ENCODE measurements at regions of chr12 and their contacts with region 1.

Region 1: DNA sequence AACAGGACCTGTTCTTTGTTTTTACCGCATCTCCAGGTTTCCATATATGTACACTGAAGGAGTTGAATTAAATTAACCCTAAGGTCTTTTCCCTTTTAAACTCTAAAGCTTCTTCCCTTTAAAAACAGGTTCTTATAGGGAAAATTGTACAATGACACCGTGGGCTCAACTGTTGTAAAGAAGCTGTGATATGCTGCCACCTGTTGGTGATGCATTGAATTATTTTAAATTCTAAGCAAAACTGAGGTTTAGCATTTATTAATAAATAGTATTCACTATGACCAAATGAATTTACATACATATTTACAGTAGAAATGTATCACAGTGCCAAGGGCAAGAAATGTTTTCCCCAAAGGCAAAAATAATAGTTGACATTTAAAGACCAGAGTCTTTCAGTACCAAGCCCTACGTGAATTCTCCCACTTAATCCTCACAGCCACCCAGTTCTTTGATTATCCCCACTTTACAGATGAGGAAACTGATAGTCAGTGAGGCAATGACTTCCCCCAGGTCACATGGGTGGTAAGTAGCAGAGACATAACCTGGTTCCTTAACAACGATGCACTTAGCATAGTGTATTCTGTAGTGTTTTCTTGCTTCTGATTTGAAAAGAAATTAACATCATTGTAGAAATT is 35.7 kb upstream of the TMEM263 start:
- DNase-seq: no peak
- H3K4me3 Mint-ChIP-seq: no peak overlapping the region
- H3K27ac Mint-ChIP-seq: no peak overlapping the region
- H3K4me1 Mint-ChIP-seq: peaks cover 10% of the 10 kb centered on the region
- H3K27me3 Mint-ChIP-seq: peaks cover 6% of the 10 kb centered on the region

Region 2: GRCh38 chr12:106357549-106358395 is 562.3 kb before region 1 on chr12 and contains the start of gene POLR3B:
- CTCF ChIA-PET with region 1: interaction called, 18 read pairs
- DNase-seq: peak; percentile 96
- H3K4me3 Mint-ChIP-seq: peak within 1 kb of the TSS; percentile 88
- H3K27ac Mint-ChIP-seq: peak within 1 kb of the TSS; percentile 94
- H3K4me1 Mint-ChIP-seq: peaks cover 16% of the 10 kb centered on the region
- H3K27me3 Mint-ChIP-seq: peaks cover 7% of the 10 kb centered on the region

Region 3: GRCh38 chr12:106380954-106381353 is 539.1 kb before region 1 on chr12:
- CTCF ChIA-PET with region 1: interaction called, 11 read pairs
- DNase-seq: no peak
- H3K4me3 Mint-ChIP-seq: no peak overlapping the region
- H3K27ac Mint-ChIP-seq: no peak overlapping the region
- H3K4me1 Mint-ChIP-seq: peaks cover 13% of the 10 kb centered on the region
- H3K27me3 Mint-ChIP-seq: no peaks in the 10 kb centered on the region

Region 4: DNA sequence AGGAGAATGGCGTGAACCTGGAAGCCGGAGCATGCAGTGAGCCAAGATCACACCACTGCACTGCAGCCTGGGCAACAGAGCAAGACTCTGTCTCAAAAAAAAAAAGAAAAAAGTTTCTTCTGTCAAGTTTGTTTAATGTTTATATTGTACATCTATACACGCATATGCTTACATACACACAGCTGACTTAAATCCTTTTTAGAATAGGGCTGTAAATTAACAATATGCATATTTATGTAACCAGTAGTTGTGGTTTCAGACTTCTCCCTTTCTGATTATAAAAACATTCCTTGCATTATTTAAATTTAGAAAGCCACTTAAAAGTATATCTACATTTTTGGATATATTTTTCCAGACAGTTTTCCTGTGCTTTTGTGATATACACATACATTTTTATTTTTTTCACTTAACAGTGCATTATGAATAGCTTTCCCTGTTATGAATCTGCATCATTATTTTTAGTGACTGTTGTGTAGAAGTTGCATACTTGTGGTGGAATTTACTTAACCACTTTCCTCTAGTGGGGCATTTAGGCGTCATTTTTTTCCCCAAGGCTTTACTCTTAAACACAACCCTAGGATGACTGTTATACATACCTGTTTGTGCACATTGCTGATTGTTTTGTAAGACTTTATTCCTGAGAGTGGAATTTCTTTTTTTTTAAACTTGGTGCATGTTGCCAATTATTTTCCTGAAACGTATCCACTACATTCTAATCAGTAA is 533.1 kb before region 1 on chr12:
- CTCF ChIA-PET with region 1: interaction called, 27 read pairs
- DNase-seq: no peak
- H3K4me3 Mint-ChIP-seq: no peak overlapping the region
- H3K27ac Mint-ChIP-seq: no peak overlapping the region
- H3K4me1 Mint-ChIP-seq: no peaks in the 10 kb centered on the region
- H3K27me3 Mint-ChIP-seq: no peaks in the 10 kb centered on the region

Region 5: DNA sequence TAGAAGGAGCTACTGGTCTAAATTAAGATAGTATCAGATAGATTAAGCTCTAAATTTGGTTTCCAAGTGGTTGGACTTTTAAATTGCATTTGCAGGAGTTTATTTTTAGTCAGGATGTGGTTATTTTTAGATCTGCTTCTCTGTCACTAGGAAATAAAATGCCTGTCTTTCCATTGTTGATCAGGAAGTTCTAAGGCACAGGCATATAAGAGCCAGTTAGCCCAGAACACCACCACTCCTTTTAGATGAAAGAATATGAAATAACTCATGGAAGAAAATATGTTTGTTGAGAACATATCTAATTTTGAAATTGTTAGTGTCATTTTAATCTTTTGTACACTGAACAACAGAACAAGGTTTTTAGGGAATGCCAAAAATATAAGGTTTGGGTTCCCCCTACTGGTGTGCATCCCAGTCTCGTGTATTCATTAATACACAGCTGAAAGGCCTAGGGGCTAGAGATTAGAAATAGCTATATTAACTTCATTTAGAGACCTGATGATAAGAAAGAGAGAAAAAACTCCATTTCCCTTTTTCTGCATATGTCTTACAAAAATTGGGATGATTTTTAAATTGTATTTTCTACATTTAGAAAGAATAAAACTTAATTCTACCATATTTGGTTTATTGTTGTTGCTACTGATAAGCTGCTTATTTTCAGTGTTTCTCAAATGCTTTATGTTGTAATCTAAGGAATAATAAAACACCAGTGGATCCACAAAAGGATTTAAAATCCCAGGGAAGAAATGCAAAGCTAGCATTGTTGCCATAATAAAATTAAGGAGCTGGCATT is 78.3 kb before region 1 on chr12:
- CTCF ChIA-PET with region 1: interaction called, 21 read pairs
- DNase-seq: peak; percentile 44
- H3K4me3 Mint-ChIP-seq: no peak overlapping the region
- H3K27ac Mint-ChIP-seq: no peak overlapping the region
- H3K4me1 Mint-ChIP-seq: peaks cover 7% of the 10 kb centered on the region
- H3K27me3 Mint-ChIP-seq: no peaks in the 10 kb centered on the region

Region 6: DNA sequence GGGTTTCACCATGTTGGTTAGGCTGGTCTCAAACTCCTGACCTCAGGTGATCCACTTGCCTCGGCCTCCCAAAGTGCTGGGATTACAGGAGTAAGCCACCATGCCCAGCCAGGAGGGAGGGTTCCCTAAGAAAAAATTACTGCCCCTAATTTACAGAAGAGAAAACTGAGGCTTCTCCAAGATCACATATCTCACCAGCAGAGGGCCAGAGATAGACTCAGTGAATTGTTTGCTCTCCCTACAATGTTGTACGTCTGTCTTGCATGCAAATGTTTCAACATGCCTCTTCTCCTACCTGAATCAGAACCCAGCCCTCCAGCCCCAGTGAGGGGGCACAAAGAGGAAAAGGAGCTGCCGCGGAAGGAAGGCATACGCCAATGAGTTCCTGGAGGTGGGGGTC is 12.6 kb before region 1 on chr12:
- CTCF ChIA-PET with region 1: interaction called, 10 read pairs
- DNase-seq: no peak
- H3K4me3 Mint-ChIP-seq: no peak overlapping the region
- H3K27ac Mint-ChIP-seq: no peak overlapping the region
- H3K4me1 Mint-ChIP-seq: peaks cover 21% of the 10 kb centered on the region
- H3K27me3 Mint-ChIP-seq: peaks cover 39% of the 10 kb centered on the region

Region 7: DNA sequence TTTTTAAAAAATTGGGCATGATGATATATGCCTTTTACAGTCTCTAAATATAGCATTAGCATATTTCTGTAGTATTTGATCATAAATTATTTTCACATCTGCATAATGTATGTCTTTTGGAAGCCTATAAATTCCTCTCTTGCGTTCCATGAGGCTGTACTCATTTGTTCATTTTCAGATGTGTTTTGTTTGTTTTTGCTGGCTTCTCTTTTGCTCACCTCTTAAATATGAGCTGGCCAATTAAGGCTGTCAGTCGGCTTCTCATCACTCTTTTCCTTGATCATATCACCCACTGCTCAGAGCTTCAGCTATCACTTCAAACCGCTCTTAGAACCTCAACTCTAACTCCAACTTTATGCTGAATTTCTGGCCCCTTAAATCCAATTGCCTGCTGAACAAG is 42.3 kb after region 1 on chr12:
- CTCF ChIA-PET with region 1: no interaction called
- DNase-seq: no peak
- H3K4me3 Mint-ChIP-seq: no peak overlapping the region
- H3K27ac Mint-ChIP-seq: no peak overlapping the region
- H3K4me1 Mint-ChIP-seq: peaks cover 21% of the 10 kb centered on the region
- H3K27me3 Mint-ChIP-seq: no peaks in the 10 kb centered on the region

Measured in activated naive CD4-positive, alpha-beta T cell treated with anti-CD3 and anti-CD28 coated beads, Interleukin-2, amount 10 ng/mL, durations not matched to agents 7 days and 5 days (primary cell).